Activated CD4-positive, alpha-beta memory T cell treated with anti-CD3 and anti-CD28 coated beads, Interleukin-2, amount 10 ng/mL, durations not matched to agents 7 days and 5 days (primary cell): ENCODE measurements at regions of chr20 and their contacts with region 1.

Region 1: GRCh38 chr20:62972270-62973032 is 19.9 kb downstream of the SLC17A9 start:
- DNase-seq: peak; percentile 87
- H3K4me3 Mint-ChIP-seq: no peak overlapping the region
- H3K27ac Mint-ChIP-seq: no peak overlapping the region
- H3K4me1 Mint-ChIP-seq: peaks cover 23% of the 10 kb centered on the region
- H3K27me3 Mint-ChIP-seq: peaks cover 48% of the 10 kb centered on the region

Region 2: DNA sequence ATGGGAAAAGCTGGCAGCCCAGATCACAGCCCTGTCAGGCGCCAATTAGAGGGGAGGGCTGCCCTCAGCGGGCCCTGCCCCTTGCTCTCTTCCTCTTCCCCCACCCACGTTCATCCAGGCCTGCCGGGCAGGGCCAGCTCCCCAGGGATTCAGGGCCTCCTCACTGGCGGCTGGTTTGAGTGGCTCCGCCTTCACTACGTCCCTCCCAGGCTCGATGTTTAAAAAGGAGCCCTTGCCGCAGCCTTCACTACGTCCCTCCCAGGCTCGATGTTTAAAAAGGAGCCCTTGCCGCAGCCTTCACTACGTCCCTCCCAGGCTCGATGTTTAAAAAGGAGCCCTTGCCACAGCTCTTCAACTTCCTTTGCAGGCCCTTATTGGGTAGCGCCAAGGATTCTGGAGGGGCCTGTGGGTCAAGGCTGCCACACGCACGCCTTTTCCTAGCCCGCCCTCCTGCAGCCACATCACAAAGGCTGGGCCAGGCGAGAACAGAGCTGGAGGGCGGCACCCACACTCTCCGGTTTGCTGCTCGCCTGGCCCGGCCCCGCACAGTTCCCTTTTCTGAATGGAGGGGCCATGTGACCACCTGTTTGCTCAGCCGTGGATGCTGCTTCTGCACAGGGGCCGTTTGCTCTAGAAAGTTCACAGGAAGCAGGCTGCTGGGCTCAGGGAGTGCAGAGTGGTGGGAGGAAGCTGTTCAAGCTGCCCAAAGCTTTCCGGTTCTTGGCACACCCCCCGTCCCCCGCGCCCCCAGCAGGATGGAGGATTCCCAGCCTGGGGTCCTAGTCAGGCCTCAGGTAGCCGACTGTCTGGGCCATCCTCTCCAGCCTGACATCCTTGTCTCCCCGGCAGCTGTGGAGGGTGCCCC is 18.4 kb before region 1 on chr20:
- CTCF ChIA-PET with region 1: interaction called, 10 read pairs
- POLR2A ChIA-PET with region 1: interaction called, 5 read pairs
- DNase-seq: peak; percentile 75
- H3K4me3 Mint-ChIP-seq: peak overlapping the region; percentile 66
- H3K27ac Mint-ChIP-seq: peak overlapping the region; percentile 87
- H3K4me1 Mint-ChIP-seq: peaks cover 29% of the 10 kb centered on the region
- H3K27me3 Mint-ChIP-seq: no peaks in the 10 kb centered on the region

Region 3: GRCh38 chr20:63004607-63005364 is 32.3 kb after region 1 on chr20:
- CTCF ChIA-PET with region 1: interaction called, 30 read pairs
- POLR2A ChIA-PET with region 1: interaction called, 7 read pairs
- DNase-seq: no peak
- H3K4me3 Mint-ChIP-seq: no peak overlapping the region
- H3K27ac Mint-ChIP-seq: no peak overlapping the region
- H3K4me1 Mint-ChIP-seq: peaks cover 17% of the 10 kb centered on the region
- H3K27me3 Mint-ChIP-seq: peaks cover 72% of the 10 kb centered on the region

Region 4: DNA sequence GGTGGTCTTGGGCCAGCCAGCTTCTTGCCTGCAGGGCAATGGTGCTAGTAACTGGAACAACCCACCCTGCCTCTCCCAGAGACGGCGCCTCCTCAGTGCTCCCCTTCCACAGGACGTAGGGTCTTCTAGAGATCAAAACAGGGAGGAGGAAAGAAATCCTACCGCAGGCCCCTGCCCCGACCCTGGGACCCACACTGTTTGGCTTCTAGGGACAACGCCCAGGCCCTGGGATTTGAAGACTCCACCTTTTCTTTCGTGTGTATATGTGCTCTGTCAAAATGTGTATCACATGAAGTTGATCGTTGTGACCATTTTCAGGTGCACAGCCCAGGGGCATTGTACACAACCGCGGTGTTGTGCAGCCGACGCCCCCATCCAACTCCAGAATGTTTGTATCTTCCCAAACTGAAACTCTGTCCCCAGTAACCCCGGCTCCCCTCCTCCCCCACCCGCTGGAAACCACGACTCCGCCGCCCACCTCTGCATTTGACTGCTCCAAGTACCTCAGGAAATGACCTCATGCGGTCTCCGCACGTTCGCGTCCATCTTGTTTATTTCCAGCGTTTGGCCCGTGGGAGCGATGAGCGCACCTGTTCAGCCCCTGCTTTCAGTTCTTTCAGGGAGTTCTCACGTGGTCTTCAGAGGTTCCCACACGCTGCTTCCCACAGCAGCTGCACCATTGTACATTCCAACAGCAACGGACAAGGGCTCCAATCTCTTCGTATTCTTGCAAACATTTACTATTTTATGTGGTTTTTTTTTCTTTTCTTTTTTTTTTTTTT is 37.7 kb after region 1 on chr20:
- CTCF ChIA-PET with region 1: interaction called, 15 read pairs
- POLR2A ChIA-PET with region 1: interaction called, 7 read pairs
- DNase-seq: peak; percentile 71
- H3K4me3 Mint-ChIP-seq: peak overlapping the region; percentile 74
- H3K27ac Mint-ChIP-seq: peak overlapping the region; percentile 30
- H3K4me1 Mint-ChIP-seq: peaks cover 17% of the 10 kb centered on the region
- H3K27me3 Mint-ChIP-seq: peaks cover 76% of the 10 kb centered on the region